PC-9 (cell line): ENCODE measurements at regions of chr15 and their contacts with region 1.

Region 1: DNA sequence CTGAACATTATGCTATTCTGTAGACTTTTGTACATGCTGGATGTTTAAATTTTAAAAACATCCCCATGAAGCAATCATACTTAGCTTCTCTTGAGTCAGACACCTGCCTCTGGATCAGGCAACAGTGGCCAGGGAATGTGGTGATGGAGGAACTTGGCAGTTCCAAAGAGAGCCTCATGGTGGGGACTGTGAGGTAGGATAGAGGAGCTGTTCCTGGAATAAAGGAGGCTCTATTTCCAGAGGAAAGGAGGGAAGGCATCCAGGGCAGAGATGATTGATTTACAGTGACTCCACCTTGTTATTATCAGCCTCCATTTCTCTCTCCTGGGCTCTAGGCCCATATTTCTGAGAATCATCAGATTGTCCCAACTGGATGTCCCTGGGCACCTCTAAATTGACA is 35.0 kb upstream of the ABHD17C start:
- DNase-seq: peak in 1 of 2 experiments; percentile 15
- H3K4me3 ChIP-seq: no peak overlapping the region
- H3K27ac ChIP-seq: peak overlapping the region; percentile 43
- H3K4me1 ChIP-seq: peaks cover 40% of the 10 kb centered on the region
- H3K27me3 ChIP-seq: no peaks in the 10 kb centered on the region
- CTCF ChIP-seq: no peak

Region 2: GRCh38 chr15:80934761-80935221 is 274.7 kb after region 1 on chr15:
- CTCF ChIA-PET with region 1: no interaction called
- POLR2A ChIA-PET with region 1: no interaction called
- intact Hi-C with region 1: no loop called
- DNase-seq: no peak
- H3K4me3 ChIP-seq: no peak overlapping the region
- H3K27ac ChIP-seq: no peak overlapping the region
- H3K4me1 ChIP-seq: peaks cover 7% of the 10 kb centered on the region; the same call in 1 of the 2 replicates
- H3K27me3 ChIP-seq: no peaks in the 10 kb centered on the region
- CTCF ChIP-seq: no peak

Region 3: DNA sequence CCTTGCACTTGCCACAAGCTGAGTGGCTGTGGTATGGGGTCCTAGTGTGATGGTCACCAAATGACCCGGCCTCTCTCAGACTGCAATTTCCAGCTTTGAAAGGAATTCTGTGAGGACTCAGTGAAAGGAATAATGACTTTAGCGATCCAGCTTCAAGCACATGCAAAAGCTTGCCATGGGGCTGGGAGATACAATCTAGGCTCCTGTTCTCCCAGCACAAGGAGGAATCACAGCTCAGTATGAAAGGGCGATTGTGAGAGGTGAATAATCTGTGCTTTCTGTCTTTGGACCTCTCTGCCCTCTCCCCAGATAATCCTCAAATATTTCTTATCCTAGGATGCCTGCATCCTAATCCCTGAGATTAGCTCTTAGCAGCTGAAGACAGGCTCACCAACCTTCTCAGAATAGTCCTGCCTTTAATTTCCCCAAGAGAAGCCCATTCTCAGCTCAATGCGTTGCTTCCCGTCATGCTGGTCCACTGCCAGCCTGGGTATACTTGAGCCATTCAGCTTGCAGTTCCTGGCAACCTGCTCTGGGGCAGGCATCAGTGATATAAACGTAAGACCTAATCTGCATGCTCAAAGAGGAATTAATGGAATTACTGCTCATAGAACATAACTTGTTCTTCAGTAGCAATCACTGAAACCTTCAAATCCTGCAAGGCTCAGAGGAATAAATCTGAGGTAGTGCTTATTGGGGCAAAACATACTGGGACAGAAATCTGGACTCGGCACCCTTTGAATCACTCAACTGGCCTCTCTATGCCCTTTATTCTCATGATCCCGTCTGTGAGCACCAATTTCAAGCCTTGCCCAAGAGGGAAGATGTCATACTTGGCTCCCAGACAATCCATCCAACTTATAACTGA is 355.7 kb after region 1 on chr15:
- CTCF ChIA-PET with region 1: no interaction called
- POLR2A ChIA-PET with region 1: no interaction called
- intact Hi-C with region 1: no loop called
- DNase-seq: no peak
- H3K4me3 ChIP-seq: no peak overlapping the region
- H3K27ac ChIP-seq: no peak overlapping the region
- H3K4me1 ChIP-seq: no peaks in the 10 kb centered on the region
- H3K27me3 ChIP-seq: no peaks in the 10 kb centered on the region
- CTCF ChIP-seq: no peak

Region 4: GRCh38 chr15:81087066-81087465 is 426.9 kb after region 1 on chr15:
- CTCF ChIA-PET with region 1: no interaction called
- POLR2A ChIA-PET with region 1: no interaction called
- intact Hi-C with region 1: loop called (anchors 10 kb)
- DNase-seq: no peak
- H3K4me3 ChIP-seq: no peak overlapping the region
- H3K27ac ChIP-seq: no peak overlapping the region
- H3K4me1 ChIP-seq: no peaks in the 10 kb centered on the region
- H3K27me3 ChIP-seq: no peaks in the 10 kb centered on the region
- CTCF ChIP-seq: no peak

Region 5: GRCh38 chr15:81106560-81106959 is 446.4 kb after region 1 on chr15:
- CTCF ChIA-PET with region 1: no interaction called
- POLR2A ChIA-PET with region 1: no interaction called
- intact Hi-C with region 1: no loop called
- DNase-seq: peak; percentile 48
- H3K4me3 ChIP-seq: no peak overlapping the region
- H3K27ac ChIP-seq: no peak overlapping the region
- H3K4me1 ChIP-seq: no peaks in the 10 kb centered on the region
- H3K27me3 ChIP-seq: peaks cover 17% of the 10 kb centered on the region; the same call in 1 of the 2 replicates
- CTCF ChIP-seq: peak; percentile 78